T-cell (primary cell): ENCODE measurements at regions of chr3 and their contacts with region 1.

Region 1: DNA sequence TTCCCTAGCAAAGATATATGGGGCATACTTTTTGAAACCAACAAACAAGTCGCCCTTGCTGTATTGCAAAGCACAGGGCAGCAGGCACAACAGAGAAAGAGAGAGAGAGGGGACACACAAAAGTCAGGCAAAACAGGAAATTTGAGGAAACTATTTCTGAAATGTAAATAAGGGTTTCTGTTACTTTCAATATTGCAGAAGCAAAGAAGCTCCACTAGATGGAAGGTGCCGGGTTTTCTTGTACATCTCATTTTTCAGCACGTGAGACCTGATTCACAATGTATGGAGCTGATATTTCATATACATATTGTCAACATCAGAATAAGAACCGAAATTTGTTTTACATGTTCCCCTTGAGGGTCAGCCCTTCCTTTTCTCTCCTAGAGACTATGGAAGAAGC is 127.4 kb downstream of the FOXP1 start:
- DNase-seq: peak in 2 of 35 experiments; percentile 24 to 64
- ATAC-seq: peak; percentile 23 to 49 (median 36)
- H3K4me3 ChIP-seq: peak overlapping the region; percentile 27
- H3K4me3 Mint-ChIP-seq: peak overlapping the region; percentile 69 to 81 (median 73)
- H3K27ac ChIP-seq: peak overlapping the region; percentile 87
- H3K27ac Mint-ChIP-seq: peak overlapping the region; percentile 97 to 99
- H3K4me1 ChIP-seq: peaks cover 50 to 82% of the 10 kb centered on the region in 2 experiments
- H3K4me1 Mint-ChIP-seq: peaks cover 96 to 99% (median 98%) of the 10 kb centered on the region in 3 donors
- H3K27me3 ChIP-seq: no peaks in the 10 kb centered on the region
- H3K27me3 Mint-ChIP-seq: no peaks in the 10 kb centered on the region

Region 2: DNA sequence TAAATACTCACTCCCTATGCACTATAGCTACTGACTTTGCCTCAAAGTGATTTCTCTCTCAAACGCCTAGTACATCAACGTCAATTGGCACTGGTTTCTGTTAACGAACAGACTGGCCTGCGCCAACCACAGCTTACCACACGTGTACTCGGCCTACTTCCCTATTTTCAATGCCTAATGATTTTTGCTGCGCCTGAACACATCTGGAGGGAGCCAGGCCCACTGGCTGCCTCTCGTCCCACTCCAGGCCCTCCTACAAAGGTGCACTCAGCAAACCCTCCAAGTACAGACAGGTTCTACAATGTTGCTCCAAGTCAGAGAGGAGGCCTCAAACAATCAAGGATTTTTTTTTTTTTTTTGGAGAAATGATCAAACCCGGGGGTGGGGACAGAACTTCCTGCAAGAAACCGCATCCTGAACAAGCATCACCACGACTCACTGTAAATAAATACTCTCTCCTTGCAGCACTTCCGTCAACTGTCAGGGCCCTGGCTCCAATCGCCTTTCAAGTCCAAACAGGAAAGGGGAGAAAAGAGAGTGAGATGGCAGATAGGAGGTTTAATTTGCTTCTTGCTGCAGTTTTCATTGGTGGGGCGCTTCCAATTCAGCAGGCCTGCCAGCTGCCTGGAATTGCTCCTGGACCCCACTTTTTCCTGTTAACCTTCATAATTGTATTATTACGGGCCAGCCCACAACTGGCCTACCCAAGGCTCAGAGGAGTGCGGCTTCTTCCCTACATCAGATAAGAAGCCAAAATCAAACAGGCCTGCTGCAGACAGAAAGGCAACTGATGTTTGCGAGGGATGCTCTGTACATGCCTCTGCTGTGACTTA is 11.9 kb before region 1 on chr3:
- CTCF ChIA-PET with region 1: interaction called in 1 of 2 experiments, 24 read pairs
- POLR2A ChIA-PET with region 1: interaction called, 5 to 6 read pairs
- DNase-seq: peak; percentile 62 to 91 (median 77)
- ATAC-seq: peak; percentile 82 to 88 (median 86)
- H3K4me3 ChIP-seq: peak overlapping the region in 1 of 2 donors; percentile 44
- H3K4me3 Mint-ChIP-seq: peak overlapping the region; percentile 69 to 75 (median 70)
- H3K27ac ChIP-seq: peak overlapping the region; percentile 94
- H3K27ac Mint-ChIP-seq: peak overlapping the region; percentile 97 to 99
- H3K4me1 ChIP-seq: peaks cover 86 to 95% of the 10 kb centered on the region in 2 experiments
- H3K4me1 Mint-ChIP-seq: peaks cover 96 to 100% (median 96%) of the 10 kb centered on the region in 3 donors
- H3K27me3 ChIP-seq: no peaks in the 10 kb centered on the region
- H3K27me3 Mint-ChIP-seq: no peaks in the 10 kb centered on the region

Region 3: DNA sequence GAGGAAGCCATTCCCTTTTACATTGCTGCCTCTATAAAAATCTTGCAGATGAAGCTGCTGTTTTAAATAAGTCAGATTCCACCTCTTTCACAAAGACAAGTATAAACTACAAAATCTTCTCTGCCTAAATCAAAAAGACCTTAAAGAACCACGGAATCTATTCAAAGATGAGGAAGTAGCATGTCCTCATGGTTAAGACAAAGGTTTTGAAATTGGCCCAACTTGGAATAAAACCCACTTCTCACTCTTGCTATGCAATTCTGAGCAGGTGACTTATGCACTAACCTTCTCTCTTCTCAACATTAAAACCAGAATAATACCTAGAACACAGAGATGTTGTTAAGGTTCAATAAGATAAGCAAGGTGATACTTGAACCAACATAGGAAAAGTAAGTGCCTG is 29.7 kb after region 1 on chr3:
- CTCF ChIA-PET with region 1: interaction called, 10 to 13 read pairs
- POLR2A ChIA-PET with region 1: interaction called, 5 to 6 read pairs
- DNase-seq: no peak
- ATAC-seq: no peak
- H3K4me3 ChIP-seq: no peak overlapping the region
- H3K4me3 Mint-ChIP-seq: peak overlapping the region; percentile 67 to 84 (median 77)
- H3K27ac ChIP-seq: peak overlapping the region; percentile 98
- H3K27ac Mint-ChIP-seq: peak overlapping the region; percentile 97 to 98
- H3K4me1 ChIP-seq: peaks cover 68 to 70% of the 10 kb centered on the region in 2 experiments
- H3K4me1 Mint-ChIP-seq: peaks cover 88 to 93% (median 89%) of the 10 kb centered on the region in 3 donors
- H3K27me3 ChIP-seq: no peaks in the 10 kb centered on the region
- H3K27me3 Mint-ChIP-seq: no peaks in the 10 kb centered on the region